AG04450 (cell line): ENCODE measurements at regions of chr9 and their contacts with region 1.

Region 1: DNA sequence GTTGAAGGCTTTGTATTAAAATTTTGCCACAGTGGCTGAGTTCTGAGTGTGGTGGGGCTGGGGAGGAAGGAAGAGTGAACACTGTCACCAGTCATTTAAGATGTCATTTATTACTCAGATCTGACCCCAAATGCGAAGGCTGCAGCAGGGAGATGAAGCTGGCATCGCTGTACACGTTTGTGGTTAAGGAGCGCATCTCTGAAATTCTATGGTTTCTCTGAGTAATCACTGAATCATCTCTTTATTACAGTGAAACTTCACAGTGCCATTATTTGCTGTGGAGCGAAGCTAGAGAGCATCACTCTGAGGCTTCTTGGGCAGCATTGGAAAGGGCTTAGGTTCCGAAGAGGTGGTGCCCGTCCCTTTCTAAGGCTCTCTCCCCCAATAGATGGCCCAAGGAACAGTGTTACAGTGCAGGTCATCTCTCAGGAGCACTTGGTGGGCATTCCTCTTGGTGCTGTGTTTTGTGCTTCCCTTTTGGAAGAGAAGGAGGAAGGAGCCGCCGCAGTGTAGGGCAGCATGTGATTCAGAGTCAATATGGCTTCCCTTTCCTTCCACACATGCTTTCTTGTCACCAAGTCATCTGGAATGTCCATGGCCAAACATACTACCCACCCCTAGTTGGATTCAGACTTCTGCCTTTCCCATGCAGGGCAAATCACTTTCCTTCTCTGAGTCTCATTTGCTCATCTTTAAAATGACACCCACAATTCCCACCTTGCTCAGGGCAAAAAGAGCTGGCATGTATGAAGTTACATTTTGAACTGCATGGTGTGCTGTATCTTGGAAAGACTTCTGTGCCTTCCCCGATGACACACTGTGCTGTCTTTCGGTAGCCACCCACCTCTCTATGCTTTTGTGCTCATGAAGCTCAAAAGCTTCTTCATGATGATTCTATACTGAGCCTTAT is 9.3 kb upstream of the TEX48 start:
- DNase-seq: peak; percentile 62
- H3K4me3 ChIP-seq: no peak overlapping the region
- H3K27ac ChIP-seq: peak overlapping the region; percentile 74
- H3K27me3 ChIP-seq: no peaks in the 10 kb centered on the region
- CTCF ChIP-seq: no peak

Region 2: DNA sequence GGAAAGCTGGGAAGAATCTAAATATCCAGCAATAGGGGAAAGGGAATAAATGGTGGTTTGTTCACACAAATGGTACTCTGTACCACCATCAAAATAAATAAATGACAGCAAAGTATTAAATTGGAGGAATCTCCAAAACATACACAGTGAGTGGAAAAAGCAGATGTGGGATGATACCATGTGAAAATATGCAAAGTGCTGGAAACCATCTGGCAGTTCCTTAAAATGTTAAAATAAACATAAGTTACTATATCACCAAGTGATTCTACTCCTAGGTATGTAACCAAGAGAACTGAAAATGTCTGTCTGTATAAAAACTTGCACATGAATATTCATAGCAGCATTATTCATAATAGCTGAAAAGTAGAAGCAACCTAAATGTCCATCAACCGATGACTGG is 32.6 kb after region 1 on chr9:
- CTCF ChIA-PET with region 1: no interaction called
- POLR2A ChIA-PET with region 1: interaction called, 11 read pairs
- DNase-seq: peak; percentile 77
- H3K4me3 ChIP-seq: no peak overlapping the region
- H3K27ac ChIP-seq: peak overlapping the region; percentile 77
- H3K27me3 ChIP-seq: peaks cover 3% of the 10 kb centered on the region
- CTCF ChIP-seq: no peak

Region 3: DNA sequence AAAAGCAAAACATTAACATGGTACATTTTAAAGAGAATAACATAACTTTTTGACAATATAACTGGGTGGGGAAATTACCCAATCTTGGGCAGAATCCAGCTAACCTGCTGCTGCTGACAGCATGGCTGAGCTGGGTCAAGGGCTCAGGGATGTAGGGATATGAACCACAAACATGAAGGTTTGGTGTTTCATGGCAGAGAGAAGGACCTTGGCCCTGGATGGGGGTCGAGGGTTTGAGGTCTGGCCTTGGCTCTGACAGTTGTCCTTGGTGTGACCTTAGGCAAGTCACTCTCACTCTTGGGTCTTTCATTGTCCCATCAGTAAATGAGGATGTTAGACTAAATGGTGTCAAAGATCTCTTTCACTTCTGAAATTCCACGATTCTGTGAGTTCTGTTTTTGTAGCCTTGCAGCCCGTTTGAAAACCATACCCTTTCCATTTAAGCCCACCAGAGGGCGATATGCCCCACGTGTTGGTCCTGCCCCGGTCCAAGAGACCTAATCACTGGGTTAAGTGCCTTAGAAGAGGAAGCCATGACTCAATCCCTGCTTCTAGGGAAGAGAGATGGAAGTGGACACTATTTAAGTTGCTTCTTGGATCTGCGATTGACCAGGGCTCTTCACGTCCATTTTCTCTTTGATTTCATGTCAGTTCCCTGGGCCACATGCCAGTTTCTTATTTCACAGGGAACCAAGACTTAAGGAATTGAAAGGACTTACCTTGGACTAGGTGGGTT is 47.4 kb after region 1 on chr9:
- CTCF ChIA-PET with region 1: no interaction called
- POLR2A ChIA-PET with region 1: no interaction called
- DNase-seq: peak; percentile 78
- H3K4me3 ChIP-seq: no peak overlapping the region
- H3K27ac ChIP-seq: no peak overlapping the region
- H3K27me3 ChIP-seq: no peaks in the 10 kb centered on the region
- CTCF ChIP-seq: peak; percentile 92